Activated CD4-positive, alpha-beta T cell treated with anti-CD3 and anti-CD28 coated beads for 36 hours (primary cell): ENCODE measurements at regions of chr20 and their contacts with region 1.

Region 1: GRCh38 chr20:51500311-51500710 is 42.2 kb downstream of the NFATC2 start:
- DNase-seq: peak; percentile 74
- ATAC-seq: peak; percentile 72
- H3K4me3 Mint-ChIP-seq: no peak overlapping the region
- H3K27ac Mint-ChIP-seq: peak overlapping the region; percentile 91
- H3K4me1 Mint-ChIP-seq: peaks cover 82% of the 10 kb centered on the region
- H3K27me3 Mint-ChIP-seq: no peaks in the 10 kb centered on the region

Region 2: GRCh38 chr20:50980851-50981713 is 519.2 kb before region 1 on chr20:
- CTCF ChIA-PET with region 1: no interaction called
- POLR2A ChIA-PET with region 1: interaction called, 3 read pairs
- intact Hi-C with region 1: loop called in 1 of 2 experiments (anchors 1 kb)
- DNase-seq: peak; percentile 84
- ATAC-seq: no peak
- H3K4me3 Mint-ChIP-seq: no peak overlapping the region
- H3K27ac Mint-ChIP-seq: peak overlapping the region; percentile 90
- H3K4me1 Mint-ChIP-seq: peaks cover 20% of the 10 kb centered on the region
- H3K27me3 Mint-ChIP-seq: peaks cover 26% of the 10 kb centered on the region

Region 3: GRCh38 chr20:51469578-51470498 is 30.5 kb before region 1 on chr20:
- CTCF ChIA-PET with region 1: interaction called, 3 read pairs
- POLR2A ChIA-PET with region 1: interaction called, 4 read pairs
- intact Hi-C with region 1: loop called in 1 of 2 experiments (anchors 2 kb)
- DNase-seq: peak; percentile 3
- ATAC-seq: no peak
- H3K4me3 Mint-ChIP-seq: no peak overlapping the region
- H3K27ac Mint-ChIP-seq: peak overlapping the region; percentile 95
- H3K4me1 Mint-ChIP-seq: peaks cover 57% of the 10 kb centered on the region
- H3K27me3 Mint-ChIP-seq: no peaks in the 10 kb centered on the region

Region 4: DNA sequence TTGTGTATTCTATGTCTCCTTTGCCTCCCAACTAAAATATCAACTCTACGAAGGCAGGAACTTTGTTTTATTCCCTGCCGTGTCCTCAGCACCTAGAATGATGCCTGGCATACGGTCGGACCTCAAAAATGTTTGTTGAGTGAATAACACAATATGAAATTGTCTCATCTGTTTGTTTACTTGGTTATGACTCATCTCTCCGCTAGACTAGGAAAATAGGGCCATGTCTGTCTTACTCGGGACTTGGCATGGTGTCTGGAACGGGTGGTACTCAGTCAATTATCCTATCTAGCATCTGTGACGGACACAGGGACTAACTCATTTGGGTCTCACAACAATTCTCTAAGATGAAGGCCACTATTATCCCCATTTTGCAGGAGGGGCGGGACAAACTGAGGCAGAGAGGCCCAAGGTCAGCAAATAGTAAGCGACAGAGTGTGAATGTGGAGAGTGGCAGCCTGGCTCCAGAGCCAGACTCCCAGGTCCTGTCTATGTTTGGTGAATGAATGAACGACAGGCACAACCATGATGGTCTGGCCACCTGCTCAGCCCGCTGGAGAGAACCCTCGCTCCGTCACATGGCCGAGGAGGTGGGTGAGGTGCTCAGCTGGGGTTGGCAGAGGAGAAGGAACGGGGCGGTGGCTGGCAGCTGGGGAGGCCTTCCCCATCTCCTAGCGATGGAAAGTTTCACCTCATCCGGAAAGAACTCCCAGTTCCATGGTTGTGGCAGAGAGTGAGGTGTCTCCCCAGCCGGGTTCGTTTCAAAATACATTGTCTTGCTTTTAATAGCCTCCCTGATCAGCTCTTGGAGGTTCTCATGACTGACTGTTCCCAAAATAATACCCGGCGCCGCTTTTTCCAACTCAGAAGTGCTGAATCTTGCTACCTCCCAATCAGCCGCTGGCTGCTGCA is 69.8 kb after region 1 on chr20:
- CTCF ChIA-PET with region 1: interaction called, 4 read pairs
- POLR2A ChIA-PET with region 1: interaction called, 3 read pairs
- intact Hi-C with region 1: loop called in 1 of 2 experiments (anchors 2 kb)
- DNase-seq: no peak
- ATAC-seq: no peak
- H3K4me3 Mint-ChIP-seq: no peak overlapping the region
- H3K27ac Mint-ChIP-seq: no peak overlapping the region
- H3K4me1 Mint-ChIP-seq: peaks cover 16% of the 10 kb centered on the region
- H3K27me3 Mint-ChIP-seq: peaks cover 8% of the 10 kb centered on the region